ENCODE measurements at regions of chr14 and their contacts with region 1.

Region 1: GRCh38 chr14:50667996-50668825 is at the start of gene SAV1:
- DNase-seq: peak; percentile 70 to 76
- H3K4me3 ChIP-seq: peak within 1 kb of the TSS; percentile 99
- H3K27ac ChIP-seq: peak within 1 kb of the TSS; percentile 80
- H3K4me1 ChIP-seq: peaks cover 23% of the 10 kb centered on the region
- H3K27me3 ChIP-seq: no peaks in the 10 kb centered on the region
- CTCF ChIP-seq: no peak
- total RNA-seq, gene SAV1: 37.1 and 40.7 TPM in 2 replicates

Region 2: GRCh38 chr14:50736932-50737419 is 68.8 kb after region 1 on chr14:
- CTCF ChIA-PET with region 1: no interaction called
- POLR2A ChIA-PET with region 1: interaction called, 10 read pairs
- intact Hi-C with region 1: loop called (anchors 2 kb)
- DNase-seq: no peak
- H3K4me3 ChIP-seq: no peak overlapping the region
- H3K27ac ChIP-seq: no peak overlapping the region
- H3K4me1 ChIP-seq: peaks cover 32% of the 10 kb centered on the region
- H3K27me3 ChIP-seq: no peaks in the 10 kb centered on the region
- CTCF ChIP-seq: no peak

Region 3: DNA sequence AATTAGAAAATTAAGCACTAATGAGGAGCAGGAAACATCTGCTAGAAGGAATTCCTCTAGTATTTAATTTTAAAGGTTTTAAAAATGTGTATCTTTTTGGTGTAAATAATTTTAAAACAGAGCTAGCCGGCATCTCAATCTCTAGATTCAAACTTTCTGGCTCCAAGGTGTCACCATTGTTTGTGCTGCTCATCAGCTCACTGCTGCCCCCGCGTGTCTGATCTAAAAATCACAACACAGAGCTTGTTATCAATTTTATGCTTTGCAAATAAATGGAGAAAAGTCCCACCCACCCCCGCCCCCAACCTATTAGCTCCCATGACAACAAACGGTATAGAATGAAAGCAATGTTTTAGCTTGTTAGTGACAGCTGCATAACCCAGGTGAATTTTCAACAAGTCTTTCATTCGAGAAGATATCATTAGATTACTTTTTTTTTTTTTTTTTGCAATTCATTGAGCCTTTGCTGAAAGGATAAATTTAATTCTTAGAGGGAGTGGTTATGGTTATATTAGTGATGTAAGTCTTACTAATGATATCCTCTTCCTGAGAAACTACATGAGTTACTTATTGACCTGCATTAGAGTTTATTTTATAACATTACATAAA is 192.4 kb after region 1 on chr14:
- CTCF ChIA-PET with region 1: interaction called, 10 read pairs
- POLR2A ChIA-PET with region 1: no interaction called
- intact Hi-C with region 1: no loop called
- DNase-seq: peak; percentile 64 to 80
- H3K4me3 ChIP-seq: peak overlapping the region; percentile 56; the same call in 1 of the 2 replicates
- H3K27ac ChIP-seq: no peak overlapping the region
- H3K4me1 ChIP-seq: no peaks in the 10 kb centered on the region
- H3K27me3 ChIP-seq: no peaks in the 10 kb centered on the region
- CTCF ChIP-seq: peak; percentile 78